Activated CD4-positive, alpha-beta memory T cell treated with anti-CD3 and anti-CD28 coated beads, Interleukin-2, amount 10 ng/mL, durations not matched to agents 7 days and 5 days (primary cell): ENCODE measurements at regions of chr15 and their contacts with region 1.

Region 1: GRCh38 chr15:92797168-92797951 is 102.8 kb upstream of the CHD2 start:
- DNase-seq: no peak
- H3K4me3 Mint-ChIP-seq: no peak overlapping the region
- H3K27ac Mint-ChIP-seq: no peak overlapping the region
- H3K4me1 Mint-ChIP-seq: peaks cover 23% of the 10 kb centered on the region
- H3K27me3 Mint-ChIP-seq: no peaks in the 10 kb centered on the region

Region 2: GRCh38 chr15:92724144-92724543 is 73.2 kb before region 1 on chr15:
- CTCF ChIA-PET with region 1: no interaction called
- POLR2A ChIA-PET with region 1: no interaction called
- DNase-seq: no peak
- H3K4me3 Mint-ChIP-seq: no peak overlapping the region
- H3K27ac Mint-ChIP-seq: no peak overlapping the region
- H3K4me1 Mint-ChIP-seq: peaks cover 6% of the 10 kb centered on the region
- H3K27me3 Mint-ChIP-seq: peaks cover 13% of the 10 kb centered on the region

Region 3: GRCh38 chr15:92903941-92904831 is 106.8 kb after region 1 on chr15:
- CTCF ChIA-PET with region 1: interaction called, 17 read pairs
- POLR2A ChIA-PET with region 1: interaction called, 678 read pairs
- DNase-seq: peak; percentile 100
- H3K4me3 Mint-ChIP-seq: peak overlapping the region; percentile 92
- H3K27ac Mint-ChIP-seq: peak overlapping the region; percentile 100
- H3K4me1 Mint-ChIP-seq: peaks cover 55% of the 10 kb centered on the region
- H3K27me3 Mint-ChIP-seq: no peaks in the 10 kb centered on the region

Region 4: GRCh38 chr15:92924216-92924615 is 126.9 kb after region 1 on chr15:
- CTCF ChIA-PET with region 1: interaction called, 74 read pairs
- POLR2A ChIA-PET with region 1: interaction called, 326 read pairs
- DNase-seq: no peak
- H3K4me3 Mint-ChIP-seq: no peak overlapping the region
- H3K27ac Mint-ChIP-seq: peak overlapping the region; percentile 11
- H3K4me1 Mint-ChIP-seq: peaks cover 75% of the 10 kb centered on the region
- H3K27me3 Mint-ChIP-seq: no peaks in the 10 kb centered on the region

Region 5: DNA sequence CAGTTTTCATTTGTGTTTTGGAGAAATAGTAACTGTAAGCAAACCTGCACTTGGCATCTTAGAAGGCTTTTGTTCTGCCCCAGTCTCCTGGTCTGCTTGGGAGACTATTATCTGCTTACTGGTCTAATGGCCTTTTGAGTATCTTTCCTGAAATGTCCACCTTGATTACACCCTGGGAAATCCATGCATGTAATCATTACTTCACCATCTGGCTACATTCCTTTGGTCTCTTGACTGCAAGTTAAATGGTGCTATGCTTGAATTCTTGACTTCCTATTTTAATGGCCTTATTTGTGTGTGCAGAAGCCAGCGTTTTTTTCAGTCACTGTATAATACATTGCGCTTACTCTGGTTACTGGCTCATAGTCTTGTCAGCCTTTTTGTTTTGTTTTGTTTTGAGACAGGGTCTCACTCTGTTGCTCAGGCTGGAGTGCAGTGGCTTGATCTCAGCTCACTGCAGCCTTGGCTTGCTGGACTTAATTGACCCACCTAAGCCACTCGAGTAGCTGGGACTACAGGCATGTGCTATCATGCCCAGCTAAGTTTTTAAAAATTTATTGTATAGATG is 132.8 kb after region 1 on chr15:
- CTCF ChIA-PET with region 1: interaction called, 14 read pairs
- POLR2A ChIA-PET with region 1: no interaction called
- DNase-seq: no peak
- H3K4me3 Mint-ChIP-seq: no peak overlapping the region
- H3K27ac Mint-ChIP-seq: no peak overlapping the region
- H3K4me1 Mint-ChIP-seq: peaks cover 42% of the 10 kb centered on the region
- H3K27me3 Mint-ChIP-seq: no peaks in the 10 kb centered on the region

Region 6: DNA sequence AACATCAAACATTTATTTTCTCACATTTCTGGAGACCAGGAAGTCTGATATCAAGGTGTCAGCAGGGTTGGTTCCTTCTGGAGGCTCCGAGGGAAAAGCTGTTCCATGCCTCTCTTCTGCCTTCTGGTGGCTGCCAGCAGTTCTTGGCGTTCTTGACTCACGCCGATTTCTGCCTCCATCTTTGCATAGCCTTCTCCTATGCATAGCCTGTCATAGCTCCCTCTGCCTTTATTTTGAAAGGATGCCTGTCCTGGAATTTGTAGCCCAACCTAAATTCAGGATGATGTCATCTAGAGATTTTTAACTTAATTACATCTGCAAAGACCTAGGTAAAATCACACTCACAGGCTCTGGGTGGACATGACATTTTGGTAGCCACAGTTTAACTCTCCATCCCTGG is 221.2 kb after region 1 on chr15:
- CTCF ChIA-PET with region 1: interaction called, 30 read pairs
- POLR2A ChIA-PET with region 1: interaction called, 3 read pairs
- DNase-seq: no peak
- H3K4me3 Mint-ChIP-seq: no peak overlapping the region
- H3K27ac Mint-ChIP-seq: no peak overlapping the region
- H3K4me1 Mint-ChIP-seq: peaks cover 61% of the 10 kb centered on the region
- H3K27me3 Mint-ChIP-seq: no peaks in the 10 kb centered on the region

Region 7: GRCh38 chr15:93030430-93031105 is 233.2 kb after region 1 on chr15:
- CTCF ChIA-PET with region 1: interaction called, 35 read pairs
- POLR2A ChIA-PET with region 1: interaction called, 3 read pairs
- DNase-seq: peak; percentile 68
- H3K4me3 Mint-ChIP-seq: no peak overlapping the region
- H3K27ac Mint-ChIP-seq: no peak overlapping the region
- H3K4me1 Mint-ChIP-seq: peaks cover 15% of the 10 kb centered on the region
- H3K27me3 Mint-ChIP-seq: no peaks in the 10 kb centered on the region

Region 8: DNA sequence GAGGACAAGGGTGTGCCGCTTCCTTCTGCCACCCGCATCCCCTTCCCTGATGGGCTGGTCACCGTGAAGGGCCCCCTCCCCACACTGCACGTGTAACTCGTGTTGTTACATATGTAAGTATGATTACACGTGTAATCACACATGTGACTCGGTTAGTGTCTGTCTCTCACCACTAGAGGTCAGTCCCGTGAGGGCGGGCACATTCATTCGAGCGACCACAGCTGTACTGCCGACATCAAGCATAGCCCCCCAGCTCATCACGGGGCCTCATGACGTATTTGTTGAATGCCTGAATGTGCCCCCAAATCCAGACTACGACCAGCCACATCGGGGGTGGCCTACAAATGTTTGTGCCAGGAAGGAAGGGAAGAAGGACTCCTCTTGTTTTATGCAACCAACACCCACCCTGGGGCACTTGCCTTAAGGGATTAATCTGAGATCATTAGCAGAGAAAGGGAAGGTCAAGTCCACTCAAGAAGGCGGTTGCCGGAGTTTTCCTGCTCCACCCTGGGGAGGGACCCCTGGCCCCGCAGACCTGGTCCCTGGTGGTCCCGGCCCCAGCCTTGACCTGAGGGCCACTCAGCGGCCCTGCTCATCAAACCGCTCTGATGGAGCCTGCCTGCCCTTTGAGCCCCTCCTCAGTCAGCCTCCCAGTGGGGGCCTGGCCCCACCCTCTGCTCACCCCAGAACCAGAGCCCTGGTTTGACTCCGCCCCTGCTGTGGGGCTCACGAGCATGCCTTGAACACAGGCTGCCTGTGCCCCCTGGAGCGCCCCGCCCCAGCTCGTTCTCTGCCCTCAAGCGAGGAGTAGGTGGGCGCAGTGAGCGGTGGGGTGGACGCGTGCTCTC is 238.8 kb after region 1 on chr15:
- CTCF ChIA-PET with region 1: interaction called, 12 read pairs
- POLR2A ChIA-PET with region 1: no interaction called
- DNase-seq: peak; percentile 44
- H3K4me3 Mint-ChIP-seq: no peak overlapping the region
- H3K27ac Mint-ChIP-seq: no peak overlapping the region
- H3K4me1 Mint-ChIP-seq: peaks cover 5% of the 10 kb centered on the region
- H3K27me3 Mint-ChIP-seq: peaks cover 2% of the 10 kb centered on the region